ENCODE measurements at regions of chr14 and their contacts with region 1.

Region 1: DNA sequence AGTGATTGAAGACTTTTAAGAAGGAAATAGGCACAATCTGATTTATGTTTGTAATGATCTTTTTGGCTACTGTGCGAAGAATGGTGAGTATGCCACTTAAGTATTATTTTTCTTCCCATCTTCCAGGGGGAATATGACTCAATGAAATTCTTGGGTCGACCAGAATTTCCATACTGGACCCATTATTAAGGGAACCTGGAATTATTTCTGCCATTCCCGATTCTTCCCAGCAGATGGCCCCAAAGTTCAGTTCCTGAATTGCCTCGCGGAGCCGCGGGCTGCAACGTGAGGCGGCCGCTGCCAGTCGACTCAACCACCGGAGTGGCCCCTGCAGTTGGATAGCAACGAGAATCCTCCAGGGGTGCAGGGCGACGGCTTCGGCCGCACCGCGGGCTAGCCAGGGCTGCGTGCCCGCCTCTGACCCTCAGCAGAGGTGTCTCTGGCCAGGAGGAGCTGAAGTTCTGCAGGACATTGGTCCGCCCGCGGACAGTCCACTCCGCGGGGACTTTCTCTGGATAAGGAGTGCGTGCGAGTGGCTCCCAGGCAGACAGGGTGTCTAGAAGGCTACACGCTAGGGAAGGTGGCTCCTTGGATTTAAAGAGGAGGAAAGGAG is 628 bp upstream of the TSHR start:
- DNase-seq: no peak
- H3K4me3 ChIP-seq: peak overlapping the region; percentile 53 to 65 (median 58)
- H3K27ac ChIP-seq: no peak overlapping the region
- H3K4me1 ChIP-seq: peaks cover 0 to 10% (median 9%) of the 10 kb centered on the region in 4 donors
- H3K27me3 ChIP-seq: peaks cover 0 to 10% (median 4%) of the 10 kb centered on the region in 4 donors
- CTCF ChIP-seq: peak; percentile 77 to 90 (median 84)
- EP300 ChIP-seq: no peak
- POLR2A ChIP-seq: no peak

Region 2: DNA sequence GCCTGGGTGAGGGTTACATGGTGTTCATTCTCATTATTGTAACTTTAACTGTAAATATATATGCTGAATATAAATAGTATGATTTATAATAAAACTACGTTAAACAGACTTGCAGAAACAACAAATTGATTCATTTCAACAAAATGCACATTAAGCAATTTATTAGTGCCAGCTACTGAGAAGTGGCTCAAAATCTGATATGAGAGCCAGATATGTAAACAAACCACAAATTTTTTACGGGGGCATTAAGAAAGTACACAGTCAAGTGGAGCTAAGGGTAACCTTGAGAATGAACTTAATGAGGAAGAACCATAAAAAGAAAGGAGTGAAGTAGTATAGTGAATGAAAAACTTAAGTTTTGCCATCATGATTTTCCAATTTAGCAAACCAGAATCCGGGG is 53.5 kb before region 1 on chr14:
- intact Hi-C with region 1: no loop called
- DNase-seq: no peak
- H3K4me3 ChIP-seq: no peak overlapping the region
- H3K27ac ChIP-seq: no peak overlapping the region
- H3K4me1 ChIP-seq: no peaks in the 10 kb centered on the region
- H3K27me3 ChIP-seq: no peaks in the 10 kb centered on the region
- CTCF ChIP-seq: no peak
- EP300 ChIP-seq: no peak
- POLR2A ChIP-seq: no peak

Region 3: GRCh38 chr14:80987235-80988032 is 32.6 kb after region 1 on chr14:
- intact Hi-C with region 1: loop called (anchors 2 kb)
- DNase-seq: no peak
- H3K4me3 ChIP-seq: no peak overlapping the region
- H3K27ac ChIP-seq: no peak overlapping the region
- H3K4me1 ChIP-seq: no peaks in the 10 kb centered on the region
- H3K27me3 ChIP-seq: peaks cover 0 to 16% (median 0%) of the 10 kb centered on the region in 4 donors
- CTCF ChIP-seq: peak; percentile 85 to 91 (median 89)
- EP300 ChIP-seq: no peak
- POLR2A ChIP-seq: no peak

Region 4: GRCh38 chr14:81113176-81113575 is 158.4 kb after region 1 on chr14:
- intact Hi-C with region 1: no loop called
- DNase-seq: no peak
- H3K4me3 ChIP-seq: no peak overlapping the region
- H3K27ac ChIP-seq: no peak overlapping the region
- H3K4me1 ChIP-seq: no peaks in the 10 kb centered on the region
- H3K27me3 ChIP-seq: no peaks in the 10 kb centered on the region
- CTCF ChIP-seq: no peak
- EP300 ChIP-seq: no peak
- POLR2A ChIP-seq: no peak

Measured in esophagus muscularis mucosa (tissue), 4 donors.